ENCODE measurements at regions of chr21 and their contacts with region 1.

Region 1: DNA sequence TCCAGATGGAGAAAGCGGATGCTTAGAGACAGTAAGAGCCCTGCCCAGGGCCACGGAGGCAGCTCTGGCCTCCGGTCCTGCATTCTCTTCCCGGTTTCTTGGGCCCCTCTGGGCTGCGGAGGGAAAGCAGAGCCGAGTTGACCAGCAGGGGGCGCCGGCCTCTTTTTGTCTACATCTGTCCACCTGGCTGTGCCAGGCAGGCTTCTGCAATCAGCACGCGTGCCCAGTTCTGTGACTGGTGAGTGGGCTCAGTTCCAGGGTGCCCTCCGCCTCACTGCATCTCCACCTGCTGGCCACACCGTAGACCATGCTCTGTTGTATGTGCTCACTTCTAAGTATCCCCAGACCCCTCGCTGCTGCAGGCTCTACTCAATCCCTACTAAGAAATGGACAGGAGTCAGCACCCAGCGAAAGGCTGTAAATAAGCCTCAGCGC is 6.7 kb upstream of the HUNK start:
- DNase-seq: peak; percentile 92
- H3K4me3 ChIP-seq: no peak overlapping the region
- H3K27ac ChIP-seq: no peak overlapping the region
- H3K4me1 ChIP-seq: no peaks in the 10 kb centered on the region
- H3K27me3 ChIP-seq: no peaks in the 10 kb centered on the region
- CTCF ChIP-seq: peak; percentile 80 to 95 (median 94)
- POLR2A ChIP-seq: no peak

Region 2: DNA sequence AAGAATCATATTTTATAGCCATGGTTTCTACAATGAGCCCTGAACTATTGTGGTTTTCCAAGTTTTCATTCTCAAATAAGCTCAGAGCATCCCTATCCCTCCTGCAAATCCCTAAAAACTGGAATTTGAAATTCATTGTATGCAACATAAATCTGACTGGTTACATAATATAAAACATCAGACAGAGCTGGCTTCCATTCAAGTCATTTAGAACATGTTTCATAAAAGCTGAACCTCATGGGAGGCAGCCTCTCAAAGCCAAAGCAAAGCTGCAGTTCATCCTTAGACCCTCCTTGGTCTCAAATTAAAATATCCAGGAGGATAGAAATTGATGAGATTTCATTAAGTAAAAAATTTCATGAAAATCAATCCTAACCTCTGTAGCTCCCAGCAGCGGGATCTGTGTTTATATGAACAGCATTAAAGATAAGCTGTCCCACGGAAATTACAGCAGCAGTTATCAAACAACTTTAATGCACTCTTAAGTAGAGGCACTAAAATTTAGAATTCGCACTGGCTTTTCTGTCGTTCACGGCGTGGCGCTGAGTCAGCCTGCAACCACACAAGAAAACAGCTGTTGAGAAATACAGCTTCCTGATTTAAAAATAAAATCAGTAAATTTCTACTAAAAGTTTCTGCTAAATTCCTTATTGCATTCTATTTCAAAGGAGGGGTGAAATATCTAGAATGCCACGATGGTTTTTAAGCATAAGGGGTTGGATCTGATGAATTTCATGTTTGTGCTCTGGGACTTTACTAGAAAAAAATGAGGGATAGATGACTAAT is 422.2 kb before region 1 on chr21:
- intact Hi-C with region 1: no loop called
- DNase-seq: no peak
- H3K4me3 ChIP-seq: no peak overlapping the region
- H3K27ac ChIP-seq: no peak overlapping the region
- H3K4me1 ChIP-seq: no peaks in the 10 kb centered on the region
- H3K27me3 ChIP-seq: no peaks in the 10 kb centered on the region
- CTCF ChIP-seq: no peak
- POLR2A ChIP-seq: no peak

Region 3: GRCh38 chr21:31623664-31624063 is 242.4 kb before region 1 on chr21:
- intact Hi-C with region 1: no loop called
- DNase-seq: no peak
- H3K4me3 ChIP-seq: no peak overlapping the region
- H3K27ac ChIP-seq: no peak overlapping the region
- H3K4me1 ChIP-seq: no peaks in the 10 kb centered on the region
- H3K27me3 ChIP-seq: no peaks in the 10 kb centered on the region
- CTCF ChIP-seq: no peak
- POLR2A ChIP-seq: no peak

Region 4: GRCh38 chr21:32135401-32136363 is 269.6 kb after region 1 on chr21:
- intact Hi-C with region 1: loop called (anchors 10 kb)
- DNase-seq: no peak
- H3K4me3 ChIP-seq: no peak overlapping the region
- H3K27ac ChIP-seq: no peak overlapping the region
- H3K4me1 ChIP-seq: no peaks in the 10 kb centered on the region
- H3K27me3 ChIP-seq: no peaks in the 10 kb centered on the region
- CTCF ChIP-seq: no peak
- POLR2A ChIP-seq: no peak

Region 5: DNA sequence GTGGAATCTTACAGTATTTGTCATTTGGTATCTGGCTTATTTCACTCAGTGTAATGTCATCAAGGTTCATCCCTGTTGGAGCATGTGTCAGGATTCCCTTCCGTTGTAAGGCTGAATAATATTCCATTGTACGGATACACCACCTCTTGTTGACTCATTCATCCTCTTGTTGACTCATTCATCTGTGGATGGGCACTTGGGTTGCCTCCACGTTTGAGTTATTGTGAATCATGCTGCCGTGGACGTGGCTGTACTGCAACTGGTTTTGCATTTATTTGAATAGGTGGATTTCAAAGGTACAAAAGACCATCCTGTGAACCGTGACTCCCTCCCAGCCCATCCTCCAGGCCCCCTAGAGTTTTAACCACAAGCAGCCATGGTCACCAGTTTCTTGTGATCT is 731.1 kb after region 1 on chr21:
- intact Hi-C with region 1: loop called (anchors 10 kb)
- DNase-seq: no peak
- H3K4me3 ChIP-seq: no peak overlapping the region
- H3K27ac ChIP-seq: no peak overlapping the region
- H3K4me1 ChIP-seq: no peaks in the 10 kb centered on the region
- H3K27me3 ChIP-seq: no peaks in the 10 kb centered on the region
- CTCF ChIP-seq: no peak
- POLR2A ChIP-seq: no peak